Vagina (tissue), 2 donors: ENCODE measurements at regions of chr19 and their contacts with region 1.

Region 1: DNA sequence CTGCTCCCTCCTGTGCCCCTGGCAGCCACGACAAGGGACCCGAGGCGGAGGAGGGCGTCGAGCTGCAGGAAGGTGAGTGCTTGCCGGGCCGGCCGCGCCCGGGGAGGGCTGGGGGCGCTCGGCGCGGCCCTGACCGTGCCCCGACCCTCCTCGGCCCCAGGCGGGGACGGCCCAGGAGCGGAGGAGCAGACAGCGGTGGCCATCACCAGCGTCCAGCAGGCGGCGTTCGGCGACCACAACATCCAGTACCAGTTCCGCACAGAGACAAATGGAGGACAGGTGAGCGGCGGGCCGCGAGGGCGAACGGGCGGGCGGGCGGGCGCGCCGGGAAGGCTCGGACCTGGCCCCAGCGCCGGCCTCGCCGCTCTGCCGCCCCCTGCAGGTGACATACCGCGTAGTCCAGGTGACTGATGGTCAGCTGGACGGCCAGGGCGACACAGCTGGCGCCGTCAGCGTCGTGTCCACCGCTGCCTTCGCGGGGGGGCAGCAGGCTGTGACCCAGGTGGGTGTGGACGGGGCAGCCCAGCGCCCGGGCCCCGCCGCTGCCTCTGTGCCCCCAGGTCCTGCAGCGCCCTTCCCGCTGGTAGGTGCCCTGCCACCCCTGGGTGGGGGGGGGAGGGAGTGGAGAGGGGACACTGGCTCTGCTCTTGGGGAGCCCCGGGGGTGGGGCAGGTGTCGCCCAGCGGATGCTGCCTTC is 807 bp downstream of the USF2 start:
- DNase-seq: no peak
- H3K4me3 ChIP-seq: peak overlapping the region; percentile 66 to 76
- H3K27ac ChIP-seq: peak overlapping the region; percentile 89
- H3K4me1 ChIP-seq: peaks cover 55% of the 10 kb centered on the region
- H3K27me3 ChIP-seq: no peaks in the 10 kb centered on the region
- CTCF ChIP-seq: peak; percentile 3 to 48 (median 34)
- POLR2A ChIP-seq: no peak

Region 2: GRCh38 chr19:35066691-35067563 is 202.6 kb before region 1 on chr19:
- intact Hi-C with region 1: loop called (anchors 10 kb)
- DNase-seq: no peak
- H3K4me3 ChIP-seq: no peak overlapping the region
- H3K27ac ChIP-seq: no peak overlapping the region
- H3K4me1 ChIP-seq: no peaks in the 10 kb centered on the region
- H3K27me3 ChIP-seq: no peaks in the 10 kb centered on the region
- CTCF ChIP-seq: peak; percentile 89 to 93 (median 90)
- POLR2A ChIP-seq: no peak